IMR-90 (cell line): ENCODE measurements at regions of chr5 and their contacts with region 1.

Region 1: DNA sequence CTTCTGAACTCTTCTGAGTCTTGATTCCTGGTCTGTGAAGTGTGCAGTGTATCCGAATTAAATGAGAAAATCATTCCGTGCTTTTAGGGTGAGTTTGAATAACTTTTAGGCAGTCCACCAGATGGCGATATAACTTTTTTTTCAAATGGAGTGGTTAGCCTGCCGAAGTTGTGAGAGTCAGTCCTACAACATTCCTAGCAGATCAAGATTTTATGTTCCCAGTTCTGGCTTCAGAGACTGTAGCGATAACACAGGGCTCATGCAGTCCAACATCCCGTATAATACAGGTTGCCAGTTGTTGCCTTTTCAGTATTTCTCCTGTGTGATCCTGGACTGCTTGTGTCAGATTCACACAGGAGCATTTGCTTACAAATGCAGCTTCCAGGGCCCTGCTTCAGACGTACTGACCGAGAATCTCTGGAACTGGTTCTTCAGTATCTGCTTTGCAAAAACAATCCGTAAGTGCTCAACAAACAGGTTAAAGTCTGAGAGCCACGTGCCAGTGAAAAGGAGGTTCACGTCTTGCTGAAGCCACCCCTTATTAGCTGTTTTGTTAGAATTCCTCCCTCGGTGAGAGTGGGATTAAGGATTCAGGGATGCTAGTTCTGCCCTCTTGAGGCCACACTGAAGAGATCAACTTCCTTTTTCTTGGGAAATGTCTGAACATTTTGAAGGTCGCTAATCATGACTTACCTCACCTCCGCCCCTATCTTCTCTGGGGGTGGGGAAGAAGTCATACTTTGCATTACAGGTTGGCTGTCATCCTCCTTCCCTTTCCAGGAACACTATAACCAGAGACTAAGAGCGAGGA is 22.8 kb downstream of the SMIM3 start:
- DNase-seq: peak; percentile 77
- ATAC-seq: peak; percentile 93
- H3K4me3 ChIP-seq: peak overlapping the region; percentile 36
- H3K27ac ChIP-seq: peak overlapping the region; percentile 54
- H3K4me1 ChIP-seq: peaks cover 8% of the 10 kb centered on the region
- H3K27me3 ChIP-seq: no peaks in the 10 kb centered on the region
- CTCF ChIP-seq: peak; percentile 66
- POLR2A ChIP-seq: no peak; the same call in 1 of the 2 replicates
- RAD21 ChIP-seq: peak; percentile 53

Region 2: GRCh38 chr5:150789943-150790611 is 11.2 kb before region 1 on chr5:
- CTCF ChIA-PET with region 1: interaction called, 24 read pairs
- POLR2A ChIA-PET with region 1: no interaction called
- dilution Hi-C with region 1: no loop called
- in situ Hi-C with region 1: no loop called
- intact Hi-C with region 1: no loop called
- DNase-seq: peak; percentile 99
- ATAC-seq: peak; percentile 95
- H3K4me3 ChIP-seq: no peak overlapping the region; the same call in 1 of the 2 replicates
- H3K27ac ChIP-seq: peak overlapping the region; percentile 94
- H3K4me1 ChIP-seq: peaks cover 15% of the 10 kb centered on the region
- H3K27me3 ChIP-seq: no peaks in the 10 kb centered on the region
- CTCF ChIP-seq: no peak
- POLR2A ChIP-seq: peak; percentile 56; the same call in 1 of the 2 replicates
- RAD21 ChIP-seq: no peak

Region 3: GRCh38 chr5:150846654-150847333 is 45.5 kb after region 1 on chr5:
- CTCF ChIA-PET with region 1: interaction called, 26 read pairs
- POLR2A ChIA-PET with region 1: no interaction called
- dilution Hi-C with region 1: no loop called
- in situ Hi-C with region 1: no loop called
- intact Hi-C with region 1: loop called (anchors 1 kb)
- DNase-seq: peak; percentile 88
- ATAC-seq: peak; percentile 97
- H3K4me3 ChIP-seq: no peak overlapping the region
- H3K27ac ChIP-seq: no peak overlapping the region
- H3K4me1 ChIP-seq: no peaks in the 10 kb centered on the region
- H3K27me3 ChIP-seq: peaks cover 12% of the 10 kb centered on the region
- CTCF ChIP-seq: peak; percentile 83
- POLR2A ChIP-seq: 0 out of 2 replicates have a peak, but pooled peaks have one; percentile 26
- RAD21 ChIP-seq: peak; percentile 84

Region 4: DNA sequence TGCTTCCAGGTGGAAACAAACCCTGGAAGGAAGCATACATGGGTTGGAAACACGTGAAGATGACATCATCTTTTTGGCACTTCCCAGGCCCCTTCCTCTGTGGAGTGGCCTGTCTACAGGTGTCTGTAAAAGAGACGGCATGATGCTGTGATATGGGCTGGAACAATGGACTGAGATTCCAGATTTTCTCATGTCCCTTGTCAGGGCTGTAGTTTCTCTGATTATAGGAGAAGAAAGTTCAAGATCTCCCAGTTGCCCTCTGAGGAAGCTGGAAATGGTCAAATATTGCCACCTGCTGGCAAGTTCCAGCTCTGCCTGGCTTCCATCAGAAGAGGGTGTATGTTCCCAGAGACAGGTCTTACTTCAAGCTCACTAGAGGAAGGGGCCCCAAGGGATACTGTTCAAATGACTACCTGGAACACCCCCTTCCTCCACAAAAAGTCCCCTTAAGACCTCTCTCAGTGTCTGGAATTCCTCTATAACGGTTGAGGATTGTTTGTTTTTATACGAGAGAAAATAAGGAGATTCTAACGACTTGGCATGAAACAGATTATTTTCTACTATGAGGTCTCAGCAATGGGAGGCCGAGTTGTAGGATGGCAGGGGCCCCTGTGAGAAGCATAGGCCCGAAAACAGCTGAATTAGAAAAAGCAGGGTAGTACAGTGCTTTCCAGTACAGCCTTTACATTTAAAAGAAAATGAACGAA is 363.5 kb after region 1 on chr5:
- CTCF ChIA-PET with region 1: interaction called, 5 read pairs
- POLR2A ChIA-PET with region 1: no interaction called
- dilution Hi-C with region 1: no loop called
- in situ Hi-C with region 1: loop called (anchors 10 kb)
- intact Hi-C with region 1: loop called (anchors 2 kb)
- DNase-seq: peak; percentile 76
- ATAC-seq: peak; percentile 91
- H3K4me3 ChIP-seq: no peak overlapping the region
- H3K27ac ChIP-seq: no peak overlapping the region
- H3K4me1 ChIP-seq: no peaks in the 10 kb centered on the region; the same call in 1 of the 2 replicates
- H3K27me3 ChIP-seq: peaks cover 9% of the 10 kb centered on the region; the same call in 1 of the 2 replicates
- CTCF ChIP-seq: peak; percentile 95
- POLR2A ChIP-seq: no peak
- RAD21 ChIP-seq: peak; percentile 93

Region 5: DNA sequence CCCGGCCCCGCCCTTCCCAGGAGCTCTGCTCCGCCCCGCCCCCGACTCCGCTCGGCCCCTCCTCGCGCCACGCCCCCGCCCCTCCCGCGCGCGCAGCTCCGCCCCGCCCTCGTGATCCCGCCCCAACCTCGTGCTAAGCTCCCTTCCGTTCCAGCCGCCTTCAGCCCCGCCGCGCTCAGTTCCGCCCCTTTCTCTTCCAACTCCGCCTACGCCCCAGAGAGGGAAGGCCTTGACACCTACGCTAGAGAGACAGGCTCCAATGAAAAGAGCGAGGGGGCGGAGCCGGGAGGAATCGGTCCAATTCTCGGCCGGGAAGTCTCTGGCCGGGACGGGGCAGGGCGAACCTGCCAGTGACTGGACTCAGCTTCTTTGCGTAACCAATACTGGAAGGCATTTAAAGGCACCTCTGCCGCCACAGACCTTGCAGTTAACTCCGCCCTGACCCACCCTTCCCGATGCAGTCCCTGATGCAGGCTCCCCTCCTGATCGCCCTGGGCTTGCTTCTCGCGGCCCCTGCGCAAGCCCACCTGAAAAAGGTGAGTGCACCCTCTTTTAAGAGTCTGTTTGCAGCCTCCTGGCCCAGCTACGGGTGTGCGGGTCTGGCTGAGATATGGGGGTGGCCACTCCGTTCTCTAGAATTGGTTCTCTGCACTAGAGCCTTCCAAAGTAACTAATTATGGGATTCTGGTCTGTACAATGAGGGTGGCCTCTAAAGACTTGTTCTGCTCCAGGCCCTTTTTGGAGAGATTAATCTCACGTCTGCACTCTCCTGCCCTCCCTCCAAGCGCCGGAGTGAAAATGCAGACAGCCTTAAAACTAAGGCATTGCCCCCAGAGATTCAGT is 451.7 kb after region 1 on chr5 and contains the start of gene GM2A:
- CTCF ChIA-PET with region 1: no interaction called
- POLR2A ChIA-PET with region 1: no interaction called
- dilution Hi-C with region 1: no loop called
- in situ Hi-C with region 1: no loop called
- intact Hi-C with region 1: loop called (anchors 5 kb)
- DNase-seq: peak; percentile 99
- ATAC-seq: peak; percentile 96
- H3K4me3 ChIP-seq: peak within 1 kb of the TSS; percentile 95
- H3K27ac ChIP-seq: peak within 1 kb of the TSS; percentile 31
- H3K4me1 ChIP-seq: no peaks in the 10 kb centered on the region; the same call in 1 of the 2 replicates
- H3K27me3 ChIP-seq: peaks cover 10% of the 10 kb centered on the region
- CTCF ChIP-seq: no peak
- POLR2A ChIP-seq: 0 out of 2 replicates have a peak, but pooled peaks have one; percentile 30
- RAD21 ChIP-seq: no peak
- total RNA-seq, gene GM2A: 18.5 and 18.6 TPM in 2 replicates

Region 6: DNA sequence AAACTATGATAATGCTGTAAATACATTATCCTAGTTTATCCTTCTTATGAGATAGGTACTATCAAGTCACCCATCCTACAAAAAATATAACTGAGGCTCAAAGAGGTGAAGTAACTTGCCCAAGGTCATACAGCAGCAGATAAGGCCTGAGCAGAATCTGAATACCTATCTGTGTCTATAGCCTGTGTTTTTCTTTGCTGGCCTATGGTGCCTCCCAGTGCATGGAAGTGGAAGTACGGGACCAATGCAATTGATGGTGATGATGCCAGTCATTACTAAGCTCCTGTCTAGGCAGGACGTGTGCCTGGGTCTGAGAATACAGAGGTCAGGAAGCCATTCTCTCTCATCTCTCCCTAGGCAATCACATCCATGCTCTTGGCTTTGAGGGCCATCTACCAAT is 722.0 kb after region 1 on chr5:
- CTCF ChIA-PET with region 1: no interaction called
- POLR2A ChIA-PET with region 1: no interaction called
- dilution Hi-C with region 1: no loop called
- in situ Hi-C with region 1: no loop called
- intact Hi-C with region 1: loop called (anchors 5 kb)
- DNase-seq: peak; percentile 55
- ATAC-seq: peak; percentile 93
- H3K4me3 ChIP-seq: no peak overlapping the region
- H3K27ac ChIP-seq: no peak overlapping the region
- H3K4me1 ChIP-seq: no peaks in the 10 kb centered on the region
- H3K27me3 ChIP-seq: peaks cover 4% of the 10 kb centered on the region; the same call in 1 of the 2 replicates
- CTCF ChIP-seq: peak; percentile 67
- POLR2A ChIP-seq: no peak
- RAD21 ChIP-seq: peak; percentile 81